Motor neuron (in vitro differentiated cells): ENCODE measurements at regions of chr13 and their contacts with region 1.

Region 1: DNA sequence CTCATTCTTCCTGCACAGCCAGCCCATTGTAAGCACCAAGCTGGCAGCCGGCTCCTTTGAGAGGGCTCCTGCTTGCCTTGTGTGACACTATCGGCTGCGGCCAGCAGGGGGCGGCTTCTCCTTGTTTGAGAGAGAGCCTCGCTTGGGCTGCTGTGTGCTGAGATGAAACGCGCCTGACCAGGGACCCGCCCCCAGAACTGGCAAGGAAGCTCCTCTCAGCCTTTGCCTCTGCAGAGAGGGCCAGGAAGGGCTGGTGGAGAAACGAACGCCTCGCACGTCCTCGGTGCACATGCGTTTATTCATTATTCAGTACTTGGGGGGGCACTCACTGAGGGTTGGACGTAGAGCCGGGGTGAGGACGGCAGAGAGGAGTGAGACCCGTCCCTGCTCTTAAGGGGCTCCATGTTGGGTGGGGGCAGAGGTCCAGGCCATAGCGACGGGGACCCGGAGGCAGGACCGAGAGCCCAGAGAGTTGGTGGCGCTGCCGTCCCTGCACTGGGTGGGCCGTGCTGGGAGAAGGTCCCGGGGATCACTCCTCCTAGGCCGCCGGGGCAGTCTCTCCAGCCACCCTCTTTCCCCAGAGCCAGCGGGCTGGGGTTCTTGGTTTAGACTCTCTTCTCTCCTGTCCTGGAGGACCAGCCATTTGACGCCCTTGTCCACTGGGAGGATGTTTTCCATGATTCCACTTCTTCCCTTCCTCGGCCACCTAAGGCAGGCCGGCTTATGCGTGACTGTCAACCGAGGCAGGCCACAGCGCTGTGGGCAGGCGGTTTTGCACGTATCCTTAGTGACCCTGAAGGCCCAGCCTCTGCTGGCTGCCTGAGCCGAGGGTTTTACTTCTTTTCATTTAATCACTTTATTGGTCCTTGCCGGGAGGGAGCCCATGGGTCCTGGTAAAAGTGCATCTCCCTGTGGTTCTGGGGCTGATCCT is 174.5 kb downstream of the KATNAL1 start:
- ATAC-seq: peak; percentile 99
- H3K4me3 ChIP-seq: no peak overlapping the region
- H3K27ac ChIP-seq: peak overlapping the region in 1 of 2 donors; percentile 21
- H3K4me1 ChIP-seq: peaks cover 3 to 4% of the 10 kb centered on the region in 2 donors

Region 2: GRCh38 chr13:30429721-30430694 is 297.1 kb after region 1 on chr13:
- in situ Hi-C with region 1: loop called in 4 of 9 experiments (anchors 25 kb)
- ATAC-seq: peak; percentile 23 to 98 (median 90)
- H3K4me3 ChIP-seq: no peak overlapping the region
- H3K27ac ChIP-seq: no peak overlapping the region
- H3K4me1 ChIP-seq: no peaks in the 10 kb centered on the region

Region 3: DNA sequence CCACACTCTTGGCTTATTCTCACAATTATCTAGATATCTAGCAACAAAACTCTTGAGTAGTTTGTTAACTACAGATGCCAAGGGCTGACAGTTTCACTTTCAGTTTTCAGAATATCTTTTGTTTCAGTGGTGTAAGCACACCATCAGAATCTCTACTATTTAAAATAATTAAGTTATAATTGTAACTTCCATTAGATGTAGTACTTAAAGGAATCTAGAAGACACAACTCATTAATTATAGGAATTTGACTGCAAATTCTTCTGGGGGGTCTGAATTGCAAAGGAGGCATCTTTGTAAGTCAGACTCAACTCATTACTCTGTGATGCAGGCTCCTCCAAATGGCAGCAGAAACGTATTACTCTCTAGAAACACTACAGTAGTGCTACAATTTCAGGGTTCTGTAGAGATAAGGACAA is 440.0 kb after region 1 on chr13:
- in situ Hi-C with region 1: loop called in 1 of 9 experiments (anchors 25 kb)
- ATAC-seq: peak in 4 of 8 experiments; percentile 34 to 89 (median 62)
- H3K4me3 ChIP-seq: no peak overlapping the region
- H3K27ac ChIP-seq: no peak overlapping the region
- H3K4me1 ChIP-seq: no peaks in the 10 kb centered on the region

Region 4: GRCh38 chr13:30802953-30803478 is 670.1 kb after region 1 on chr13:
- in situ Hi-C with region 1: loop called in 1 of 9 experiments (anchors 25 kb)
- ATAC-seq: peak; percentile 95 to 100 (median 98)
- H3K4me3 ChIP-seq: peak overlapping the region in 1 of 5 donors; percentile 0
- H3K27ac ChIP-seq: peak overlapping the region in 1 of 2 donors; percentile 27
- H3K4me1 ChIP-seq: peaks cover 23 to 27% of the 10 kb centered on the region in 2 donors

Region 5: DNA sequence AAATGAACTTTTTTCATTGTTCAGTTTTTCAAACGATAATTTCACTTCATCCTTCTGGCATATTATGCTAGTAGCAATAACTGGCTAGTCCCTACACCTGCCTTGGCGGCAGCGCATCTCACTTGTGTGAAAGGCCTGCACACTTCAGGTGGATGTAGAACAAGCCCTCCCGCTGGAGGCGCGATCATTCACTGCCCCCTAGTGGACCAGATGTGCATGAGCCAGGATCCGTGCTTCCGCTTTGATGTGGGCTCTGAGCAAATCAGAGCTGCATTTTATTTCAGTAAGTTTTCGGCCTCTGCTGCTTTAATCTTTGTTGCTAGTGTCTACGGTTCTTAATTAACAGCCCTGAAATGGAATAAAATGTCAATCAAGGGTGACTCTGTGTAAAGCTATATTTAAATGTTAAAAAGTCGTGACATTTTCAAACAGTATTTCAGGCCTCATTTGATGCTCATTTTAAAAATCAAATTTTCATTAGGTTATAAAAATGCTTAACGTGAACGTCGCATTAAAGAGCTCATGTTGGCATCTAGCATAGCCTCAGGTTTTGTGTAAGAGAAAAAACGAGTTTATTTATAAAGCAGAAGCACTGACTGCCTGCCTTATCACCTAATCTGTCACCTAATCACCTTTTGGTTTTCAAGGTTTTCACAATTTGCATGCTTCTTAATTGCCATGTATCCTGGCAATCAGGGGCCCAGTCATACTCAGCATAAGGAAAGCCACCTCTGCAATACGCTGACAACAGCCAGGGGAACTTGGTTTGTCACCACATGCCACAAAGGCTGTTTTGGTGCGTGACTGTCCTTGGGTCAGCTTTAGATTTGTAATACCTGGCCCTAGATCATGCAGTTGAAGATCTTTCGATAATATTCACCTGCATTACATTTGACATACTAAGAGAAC is 911.7 kb after region 1 on chr13:
- in situ Hi-C with region 1: loop called in 2 of 9 experiments (anchors 25 kb)
- ATAC-seq: peak; percentile 34 to 84 (median 38)
- H3K4me3 ChIP-seq: no peak overlapping the region
- H3K27ac ChIP-seq: no peak overlapping the region
- H3K4me1 ChIP-seq: peaks cover 33 to 42% of the 10 kb centered on the region in 2 donors